ENCODE measurements at regions of chr3 and their contacts with region 1.

Region 1: GRCh38 chr3:176872771-176873209 is 324.5 kb downstream of the TBL1XR1 start:
- DNase-seq: no peak
- ATAC-seq: peak; percentile 68
- H3K4me3 ChIP-seq: no peak overlapping the region
- H3K27ac ChIP-seq: no peak overlapping the region
- H3K4me1 ChIP-seq: no peaks in the 10 kb centered on the region
- H3K27me3 ChIP-seq: no peaks in the 10 kb centered on the region

Region 2: DNA sequence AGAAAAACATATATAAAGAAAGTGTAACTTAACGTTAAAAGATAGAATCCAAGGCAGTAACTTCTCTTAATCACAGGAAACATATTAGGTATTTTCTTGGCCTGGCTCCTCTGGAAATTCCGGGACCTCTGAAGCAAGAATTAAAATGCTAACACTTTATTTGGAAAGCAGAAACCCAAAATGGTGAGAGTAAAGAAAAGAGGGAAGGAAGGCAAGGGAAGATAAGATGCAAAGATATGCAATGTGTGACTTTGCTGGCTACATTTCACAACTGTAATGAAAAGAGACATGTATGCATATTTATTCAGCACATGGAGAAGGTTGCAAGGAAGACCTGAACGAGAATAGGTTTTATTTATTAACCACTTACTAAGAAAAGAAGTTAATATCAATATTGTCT is 48.0 kb before region 1 on chr3:
- intact Hi-C with region 1: no loop called
- DNase-seq: no peak
- ATAC-seq: no peak
- H3K4me3 ChIP-seq: no peak overlapping the region
- H3K27ac ChIP-seq: no peak overlapping the region
- H3K4me1 ChIP-seq: no peaks in the 10 kb centered on the region
- H3K27me3 ChIP-seq: no peaks in the 10 kb centered on the region

Region 3: DNA sequence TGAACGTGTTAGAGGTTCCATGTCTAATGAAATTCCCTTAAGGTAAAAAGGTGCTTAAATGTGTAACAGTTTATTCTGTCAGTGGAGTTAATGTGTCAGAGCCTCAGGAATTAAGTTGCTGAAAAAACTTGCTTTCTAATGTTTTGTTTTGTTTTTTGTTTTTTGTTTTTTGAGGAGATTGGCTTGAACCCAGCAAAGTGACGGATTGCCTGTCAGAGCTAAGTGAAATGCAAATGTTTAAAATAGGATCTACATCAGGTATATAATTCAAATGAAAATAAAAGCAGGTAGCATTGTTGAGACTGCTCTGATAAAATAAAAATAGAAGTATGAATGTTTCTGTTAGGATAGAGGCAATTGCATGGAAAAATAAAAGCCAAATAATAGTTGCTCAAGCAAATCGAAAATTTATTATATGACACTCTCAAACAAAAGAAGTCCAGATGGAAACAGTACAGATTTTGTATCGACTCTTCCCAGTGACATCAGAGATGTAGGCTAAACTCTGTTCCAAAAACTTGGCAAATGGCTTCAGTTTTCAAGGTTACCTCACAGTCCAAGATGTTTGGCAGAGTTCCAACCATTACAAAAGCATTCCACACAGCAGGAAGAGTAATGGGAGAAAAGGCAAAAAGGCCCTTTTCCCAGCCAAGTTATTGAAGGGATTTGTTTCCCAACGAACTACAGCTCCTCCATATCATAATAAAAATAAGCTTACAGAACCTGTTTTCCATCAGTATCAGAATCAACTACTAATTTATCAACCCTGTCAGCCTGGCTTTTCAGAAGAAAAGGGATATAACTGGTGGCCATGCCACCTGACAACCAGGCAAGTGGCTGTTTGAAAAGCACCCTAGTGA is 33.5 kb after region 1 on chr3:
- intact Hi-C with region 1: loop called in 1 of 2 experiments (anchors 1 kb)
- DNase-seq: no peak
- ATAC-seq: peak; percentile 33
- H3K4me3 ChIP-seq: no peak overlapping the region
- H3K27ac ChIP-seq: peak overlapping the region; percentile 48 to 57
- H3K4me1 ChIP-seq: peaks cover 0 to 6% of the 10 kb centered on the region in 2 donors
- H3K27me3 ChIP-seq: no peaks in the 10 kb centered on the region

Region 4: DNA sequence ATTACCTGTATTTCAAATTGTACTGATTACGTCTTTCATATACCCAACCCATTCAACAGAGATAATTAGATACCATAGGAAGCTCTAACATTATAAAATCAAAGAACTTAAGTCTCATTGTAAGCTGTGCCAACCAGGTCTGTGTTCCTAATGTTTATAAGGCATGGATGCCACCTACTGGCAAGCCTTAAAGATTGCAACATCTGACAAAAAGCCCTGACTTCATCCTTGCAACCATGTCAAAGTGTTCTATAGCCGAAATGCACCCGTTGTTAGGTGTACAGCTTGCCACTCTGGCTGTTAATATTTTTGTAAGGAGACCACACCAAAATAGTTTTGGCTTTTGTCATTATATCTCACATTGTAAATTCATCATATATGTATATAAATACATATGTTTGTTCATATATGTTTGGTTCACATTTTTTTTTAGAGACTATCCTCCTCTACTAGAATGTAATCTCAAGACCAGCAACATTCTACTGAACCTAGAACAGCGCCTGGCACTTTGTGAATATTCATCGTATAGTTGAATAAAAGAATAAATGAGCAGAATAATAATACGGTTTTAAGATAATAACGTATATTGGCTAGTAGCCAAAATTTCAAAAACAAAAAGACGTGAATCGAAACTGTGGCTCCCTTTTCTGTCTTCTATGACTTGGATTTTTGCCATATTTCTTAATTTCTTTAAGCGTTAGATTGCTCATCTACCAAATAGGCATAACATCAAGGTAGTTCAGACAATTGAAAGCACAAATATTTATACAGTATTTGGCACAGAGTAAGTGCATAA is 66.4 kb after region 1 on chr3:
- intact Hi-C with region 1: loop called (anchors 2 to 5 kb)
- DNase-seq: no peak
- ATAC-seq: peak; percentile 77
- H3K4me3 ChIP-seq: no peak overlapping the region
- H3K27ac ChIP-seq: no peak overlapping the region
- H3K4me1 ChIP-seq: no peaks in the 10 kb centered on the region
- H3K27me3 ChIP-seq: no peaks in the 10 kb centered on the region

Measured in aorta (tissue), 5 donors.